Activated T-helper 1 cell treated with anti-CD3 and anti-CD28 coated beads, Interleukin-12 subunit alpha, Interleukin-12 subunit beta, Interleukin-2, Interleukin-4 antibody, amounts not matched to agents 30 ng/mL and 10 ng/mL and 1 ng/mL, durations not matched to agents 14 hours and 24 hours and 36 hours (primary cell): ENCODE measurements at regions of chr1 and their contacts with region 1.

Region 1: GRCh38 chr1:8423650-8424538 is 106.0 kb downstream of the SLC45A1 start:
- DNase-seq: peak; percentile 32
- H3K4me3 Mint-ChIP-seq: peak overlapping the region; percentile 91
- H3K27ac Mint-ChIP-seq: peak overlapping the region; percentile 92
- H3K4me1 Mint-ChIP-seq: peaks cover 44% of the 10 kb centered on the region
- H3K27me3 Mint-ChIP-seq: no peaks in the 10 kb centered on the region

Region 2: GRCh38 chr1:8374812-8375211 is 49.1 kb before region 1 on chr1:
- intact Hi-C with region 1: loop called (anchors 5 kb)
- DNase-seq: no peak
- H3K4me3 Mint-ChIP-seq: no peak overlapping the region
- H3K27ac Mint-ChIP-seq: peak overlapping the region; percentile 60
- H3K4me1 Mint-ChIP-seq: peaks cover 40% of the 10 kb centered on the region
- H3K27me3 Mint-ChIP-seq: no peaks in the 10 kb centered on the region

Region 3: GRCh38 chr1:8409106-8409505 is 14.8 kb before region 1 on chr1:
- intact Hi-C with region 1: loop called (anchors 2 kb)
- DNase-seq: no peak
- H3K4me3 Mint-ChIP-seq: peak overlapping the region; percentile 21
- H3K27ac Mint-ChIP-seq: peak overlapping the region; percentile 53
- H3K4me1 Mint-ChIP-seq: peaks cover 48% of the 10 kb centered on the region
- H3K27me3 Mint-ChIP-seq: no peaks in the 10 kb centered on the region

Region 4: GRCh38 chr1:8540261-8540941 is 116.5 kb after region 1 on chr1:
- intact Hi-C with region 1: loop called (anchors 5 kb)
- DNase-seq: no peak
- H3K4me3 Mint-ChIP-seq: peak overlapping the region; percentile 65
- H3K27ac Mint-ChIP-seq: peak overlapping the region; percentile 91
- H3K4me1 Mint-ChIP-seq: peaks cover 51% of the 10 kb centered on the region
- H3K27me3 Mint-ChIP-seq: no peaks in the 10 kb centered on the region

Region 5: GRCh38 chr1:8702850-8703810 is 279.2 kb after region 1 on chr1:
- intact Hi-C with region 1: loop called (anchors 1 kb)
- DNase-seq: peak; percentile 69
- H3K4me3 Mint-ChIP-seq: peak overlapping the region; percentile 97
- H3K27ac Mint-ChIP-seq: peak overlapping the region; percentile 89
- H3K4me1 Mint-ChIP-seq: peaks cover 58% of the 10 kb centered on the region
- H3K27me3 Mint-ChIP-seq: peaks cover 3% of the 10 kb centered on the region